ENCODE measurements at regions of chr17 and their contacts with region 1.

Region 1: GRCh38 chr17:64306850-64307463 is 43.9 kb upstream of the TEX2 start:
- DNase-seq: peak; percentile 73 to 86
- H3K4me3 ChIP-seq: no peak overlapping the region
- H3K27ac ChIP-seq: no peak overlapping the region
- H3K4me1 ChIP-seq: peaks cover 0 to 12% (median 5%) of the 10 kb centered on the region in 4 donors
- H3K27me3 ChIP-seq: no peaks in the 10 kb centered on the region
- CTCF ChIP-seq: peak in 5 of 7 experiments; percentile 54 to 94 (median 71)
- EP300 ChIP-seq: no peak
- POLR2A ChIP-seq: no peak

Region 2: GRCh38 chr17:64411999-64412771 is 105.2 kb after region 1 on chr17:
- intact Hi-C with region 1: loop called (anchors 5 kb)
- DNase-seq: peak in 1 of 2 donors; percentile 71
- H3K4me3 ChIP-seq: peak overlapping the region in 3 of 4 donors; percentile 9 to 23 (median 16)
- H3K27ac ChIP-seq: peak overlapping the region in 4 of 5 donors; percentile 13 to 59 (median 50)
- H3K4me1 ChIP-seq: peaks cover 0 to 27% (median 6%) of the 10 kb centered on the region in 4 donors
- H3K27me3 ChIP-seq: no peaks in the 10 kb centered on the region
- CTCF ChIP-seq: no peak
- EP300 ChIP-seq: no peak
- POLR2A ChIP-seq: no peak